Natural killer cell (primary cell): ENCODE measurements at regions of chr5 and their contacts with region 1.

Region 1: DNA sequence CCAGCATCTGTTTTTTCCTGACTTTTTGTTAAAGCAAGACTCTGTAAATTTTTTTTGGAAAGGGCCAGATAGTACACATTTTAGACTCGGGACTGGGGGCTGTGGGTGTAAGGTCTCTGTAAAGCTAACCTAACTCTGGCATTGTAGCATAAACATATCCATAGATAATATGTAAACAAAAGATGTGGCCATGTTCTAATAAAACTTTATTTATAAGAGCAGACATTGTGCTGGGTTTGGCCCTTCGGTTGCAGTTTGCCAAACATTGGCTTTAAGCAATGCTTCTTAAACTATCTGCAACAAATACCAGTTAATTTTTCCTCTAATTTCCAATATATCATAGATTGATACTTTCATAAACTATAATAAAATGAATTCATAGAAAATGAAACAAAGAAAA is 605.2 kb downstream of the EBF1 start:
- DNase-seq: no peak
- ATAC-seq: no peak
- H3K4me3 ChIP-seq: no peak overlapping the region
- H3K4me3 Mint-ChIP-seq: no peak overlapping the region
- H3K27ac ChIP-seq: no peak overlapping the region
- H3K27ac Mint-ChIP-seq: no peak overlapping the region
- H3K4me1 ChIP-seq: no peaks in the 10 kb centered on the region
- H3K4me1 Mint-ChIP-seq: no peaks in the 10 kb centered on the region
- H3K27me3 ChIP-seq: no peaks in the 10 kb centered on the region
- H3K27me3 Mint-ChIP-seq: no peaks in the 10 kb centered on the region
- CTCF ChIP-seq: no peak

Region 2: GRCh38 chr5:158180407-158180806 is 314.1 kb before region 1 on chr5:
- intact Hi-C with region 1: no loop called
- DNase-seq: no peak
- ATAC-seq: no peak
- H3K4me3 ChIP-seq: no peak overlapping the region
- H3K4me3 Mint-ChIP-seq: no peak overlapping the region
- H3K27ac ChIP-seq: no peak overlapping the region
- H3K27ac Mint-ChIP-seq: no peak overlapping the region
- H3K4me1 ChIP-seq: no peaks in the 10 kb centered on the region
- H3K4me1 Mint-ChIP-seq: no peaks in the 10 kb centered on the region
- H3K27me3 ChIP-seq: no peaks in the 10 kb centered on the region
- H3K27me3 Mint-ChIP-seq: peaks cover 0 to 9% of the 10 kb centered on the region in 2 donors
- CTCF ChIP-seq: no peak

Region 3: DNA sequence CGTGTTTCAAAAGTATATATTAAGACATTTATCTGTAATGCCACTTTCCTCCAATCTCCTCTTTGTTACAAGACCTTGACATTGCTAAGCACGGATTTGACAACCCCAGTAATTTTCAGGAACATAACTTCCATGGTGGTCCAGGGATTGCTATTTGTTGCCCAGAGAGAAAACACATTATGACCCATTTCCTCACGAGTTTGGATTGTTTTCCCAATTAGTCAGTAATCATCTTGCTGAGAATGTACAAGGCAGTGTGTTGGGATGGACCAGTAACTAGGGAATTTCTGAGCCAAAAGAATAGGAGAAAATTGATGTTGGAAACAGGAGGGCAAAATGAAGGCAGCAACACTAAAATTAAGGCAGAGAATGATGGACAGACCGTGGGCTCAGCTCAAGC is 31.1 kb after region 1 on chr5:
- intact Hi-C with region 1: loop called (anchors 2 kb)
- DNase-seq: no peak
- ATAC-seq: no peak
- H3K4me3 ChIP-seq: no peak overlapping the region
- H3K4me3 Mint-ChIP-seq: no peak overlapping the region
- H3K27ac ChIP-seq: no peak overlapping the region
- H3K27ac Mint-ChIP-seq: no peak overlapping the region
- H3K4me1 ChIP-seq: no peaks in the 10 kb centered on the region
- H3K4me1 Mint-ChIP-seq: no peaks in the 10 kb centered on the region
- H3K27me3 ChIP-seq: no peaks in the 10 kb centered on the region
- H3K27me3 Mint-ChIP-seq: no peaks in the 10 kb centered on the region
- CTCF ChIP-seq: no peak